Activated CD4-positive, alpha-beta memory T cell treated with anti-CD3 and anti-CD28 coated beads for 36 hours (primary cell): ENCODE measurements at regions of chr10 and their contacts with region 1.

Region 1: DNA sequence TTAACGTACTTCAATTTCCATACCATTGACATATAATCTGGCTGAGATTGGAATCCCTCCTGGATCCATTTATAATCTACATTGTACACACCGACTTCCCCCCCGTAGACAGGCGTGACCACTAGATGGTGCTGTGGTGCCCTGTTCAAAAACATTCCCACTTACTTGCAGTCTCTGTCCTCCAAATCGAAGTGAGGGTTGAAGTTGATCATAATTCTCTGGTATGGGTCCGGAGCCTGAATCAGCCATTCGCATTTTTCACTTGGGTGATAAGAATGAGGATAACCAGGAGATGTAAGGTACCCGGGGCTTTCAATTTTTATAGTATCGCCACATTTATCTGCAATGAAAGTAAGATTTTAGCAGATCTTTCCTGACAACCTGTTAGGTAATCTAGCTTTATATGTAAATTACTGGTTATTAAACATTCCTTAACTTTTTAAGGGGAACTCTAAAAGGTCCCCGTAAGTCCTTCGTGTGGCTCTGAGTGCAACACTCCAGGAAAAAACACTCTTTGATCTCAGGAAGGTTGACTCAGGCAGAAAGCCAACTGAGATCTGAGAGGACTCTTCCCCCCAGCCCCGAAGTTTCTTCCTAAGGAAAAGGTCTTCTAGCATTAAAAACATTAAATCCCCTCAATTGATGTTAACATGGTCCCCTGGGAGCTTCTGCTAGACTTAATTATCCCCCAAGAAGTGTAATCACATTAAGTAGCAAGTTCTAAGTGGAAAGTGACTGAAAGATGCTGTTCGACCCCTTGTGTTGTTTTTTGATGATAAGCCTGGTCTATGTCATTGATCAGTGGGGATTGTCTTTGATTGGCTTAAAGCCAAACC is 3.7 kb downstream of the NRP1 start:
- DNase-seq: peak; percentile 86
- H3K4me3 Mint-ChIP-seq: no peak overlapping the region
- H3K27ac Mint-ChIP-seq: no peak overlapping the region
- H3K4me1 Mint-ChIP-seq: peaks cover 18% of the 10 kb centered on the region
- H3K27me3 Mint-ChIP-seq: peaks cover 56% of the 10 kb centered on the region

Region 2: DNA sequence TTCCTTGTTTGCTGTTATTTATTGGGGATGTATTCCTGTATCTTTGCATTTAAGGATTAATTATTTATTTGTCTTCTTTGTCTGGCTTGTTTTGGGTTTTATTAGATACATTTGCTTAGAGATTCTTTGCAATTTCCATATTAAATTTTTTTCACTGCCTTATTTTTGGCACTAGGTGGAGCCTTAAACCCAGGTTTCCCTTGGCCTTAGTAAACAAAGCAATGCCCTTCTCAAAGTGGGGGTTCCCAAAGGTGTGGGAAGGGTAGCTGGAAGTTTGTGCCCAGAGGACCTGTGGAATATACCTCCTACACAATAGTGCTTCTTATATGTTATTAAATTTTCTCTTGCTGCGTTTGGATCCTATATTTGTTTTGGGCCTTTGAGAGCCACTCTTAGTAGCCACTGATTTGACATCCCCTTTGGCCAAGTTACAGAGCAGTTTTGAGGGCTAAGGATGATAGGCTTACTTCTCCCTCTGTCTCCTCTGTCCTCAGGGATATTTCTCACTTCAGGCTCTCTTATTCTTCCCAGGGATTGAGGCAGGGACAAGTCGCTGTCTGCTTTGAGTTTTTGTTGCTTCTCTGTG is 535.1 kb before region 1 on chr10:
- CTCF ChIA-PET with region 1: no interaction called
- POLR2A ChIA-PET with region 1: no interaction called
- intact Hi-C with region 1: loop called (anchors 10 kb)
- DNase-seq: no peak
- H3K4me3 Mint-ChIP-seq: no peak overlapping the region
- H3K27ac Mint-ChIP-seq: no peak overlapping the region
- H3K4me1 Mint-ChIP-seq: no peaks in the 10 kb centered on the region
- H3K27me3 Mint-ChIP-seq: no peaks in the 10 kb centered on the region

Region 3: DNA sequence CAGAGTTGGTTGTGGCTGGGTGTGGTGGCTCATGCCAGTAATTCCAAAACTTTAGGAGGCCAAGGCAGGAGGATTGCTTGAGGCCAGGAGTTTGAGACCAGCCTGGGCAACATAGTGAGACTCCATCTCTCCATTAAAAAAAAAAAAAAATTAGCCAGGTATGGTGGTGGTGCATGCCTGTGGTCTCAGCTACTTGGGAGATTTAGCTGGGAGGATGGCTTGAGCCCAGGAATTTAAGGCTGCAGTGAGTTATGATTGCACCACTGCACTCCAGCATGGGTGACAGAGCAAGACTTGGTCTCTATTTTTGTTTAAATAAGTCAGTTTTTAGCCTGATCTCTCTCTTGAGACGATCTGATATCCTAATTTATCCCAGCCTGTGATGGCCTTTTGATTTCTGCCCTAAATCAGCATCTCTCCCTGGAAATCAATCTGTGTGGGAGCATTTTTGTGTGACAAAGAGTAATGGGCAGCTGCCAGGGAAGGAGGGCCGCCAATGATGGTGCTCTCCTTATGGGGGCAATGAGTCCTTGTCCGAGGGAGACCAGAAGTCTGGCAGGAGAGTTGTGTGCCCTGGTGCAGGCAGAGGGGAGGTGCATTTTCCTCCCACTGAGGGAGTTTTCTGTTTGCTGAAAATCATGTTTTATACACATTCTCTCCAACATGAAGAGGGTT is 107.3 kb before region 1 on chr10:
- CTCF ChIA-PET with region 1: no interaction called
- POLR2A ChIA-PET with region 1: no interaction called
- intact Hi-C with region 1: no loop called
- DNase-seq: no peak
- H3K4me3 Mint-ChIP-seq: no peak overlapping the region
- H3K27ac Mint-ChIP-seq: no peak overlapping the region
- H3K4me1 Mint-ChIP-seq: no peaks in the 10 kb centered on the region
- H3K27me3 Mint-ChIP-seq: peaks cover 7% of the 10 kb centered on the region

Region 4: DNA sequence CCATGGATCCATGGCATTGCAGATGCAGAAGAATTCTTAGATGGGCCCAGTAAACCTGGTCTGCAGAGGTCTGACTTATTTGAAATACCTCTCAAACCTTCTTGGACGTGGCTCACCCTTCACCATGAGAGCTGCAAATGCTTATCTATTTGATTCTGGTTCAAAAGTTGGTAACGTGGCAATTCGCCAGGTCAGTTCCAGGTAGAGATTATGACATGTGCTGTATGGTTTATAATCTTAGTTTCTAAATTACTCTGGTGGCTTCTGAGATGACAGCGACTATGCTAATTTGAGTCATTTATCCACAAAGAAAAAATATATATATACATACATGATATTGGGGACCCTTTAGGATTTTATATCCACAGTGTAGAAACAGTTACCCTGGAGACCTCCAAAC is 65.1 kb before region 1 on chr10:
- CTCF ChIA-PET with region 1: no interaction called
- POLR2A ChIA-PET with region 1: no interaction called
- intact Hi-C with region 1: loop called (anchors 5 kb)
- DNase-seq: peak; percentile 77
- H3K4me3 Mint-ChIP-seq: no peak overlapping the region
- H3K27ac Mint-ChIP-seq: peak overlapping the region; percentile 13
- H3K4me1 Mint-ChIP-seq: peaks cover 28% of the 10 kb centered on the region
- H3K27me3 Mint-ChIP-seq: peaks cover 32% of the 10 kb centered on the region

Region 5: GRCh38 chr10:33376976-33377657 is 46.4 kb after region 1 on chr10:
- CTCF ChIA-PET with region 1: interaction called, 3 read pairs
- POLR2A ChIA-PET with region 1: no interaction called
- intact Hi-C with region 1: loop called (anchors 5 kb)
- DNase-seq: no peak
- H3K4me3 Mint-ChIP-seq: no peak overlapping the region
- H3K27ac Mint-ChIP-seq: no peak overlapping the region
- H3K4me1 Mint-ChIP-seq: peaks cover 27% of the 10 kb centered on the region
- H3K27me3 Mint-ChIP-seq: peaks cover 13% of the 10 kb centered on the region

Region 6: DNA sequence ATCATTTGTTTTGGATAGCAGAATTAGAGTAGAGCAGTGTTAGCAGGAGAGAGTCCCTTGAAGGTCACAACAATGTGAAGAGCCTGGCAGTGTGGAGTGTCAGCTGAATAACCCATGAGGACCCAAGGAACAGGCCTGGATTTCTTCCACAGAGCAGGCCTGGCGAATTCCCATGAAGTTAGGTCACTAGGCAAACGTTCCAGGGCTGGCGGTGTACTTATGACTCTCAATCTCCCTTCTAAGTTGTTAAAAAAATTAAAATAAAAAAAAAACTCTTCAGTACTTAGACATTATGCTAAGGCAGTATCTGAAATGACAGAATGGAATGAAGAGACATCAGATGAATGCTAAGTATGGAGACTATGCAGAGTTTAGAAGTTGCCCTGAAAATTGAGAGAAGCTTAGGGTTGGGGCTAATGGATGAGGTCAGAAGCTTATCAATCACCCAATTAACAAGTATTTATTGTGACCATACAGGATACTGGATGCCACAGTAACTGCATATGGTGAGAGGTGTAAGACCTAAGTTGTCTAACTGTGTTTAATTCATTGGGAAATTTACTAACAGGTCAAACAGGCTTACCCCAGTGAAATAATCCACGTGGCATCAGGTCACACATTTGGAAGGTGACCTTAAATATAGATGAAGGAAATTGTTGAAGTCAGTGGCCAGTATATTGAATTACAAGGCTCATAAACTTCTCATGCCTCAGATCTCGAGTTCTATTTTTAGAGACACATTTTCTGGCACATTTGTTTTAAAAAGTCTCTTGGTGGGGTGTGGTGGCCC is 129.9 kb after region 1 on chr10:
- CTCF ChIA-PET with region 1: no interaction called
- POLR2A ChIA-PET with region 1: no interaction called
- intact Hi-C with region 1: no loop called
- DNase-seq: no peak
- H3K4me3 Mint-ChIP-seq: no peak overlapping the region
- H3K27ac Mint-ChIP-seq: no peak overlapping the region
- H3K4me1 Mint-ChIP-seq: no peaks in the 10 kb centered on the region
- H3K27me3 Mint-ChIP-seq: peaks cover 3% of the 10 kb centered on the region

Region 7: GRCh38 chr10:33509231-33509831 is 178.6 kb after region 1 on chr10:
- CTCF ChIA-PET with region 1: interaction called, 4 read pairs
- POLR2A ChIA-PET with region 1: no interaction called
- intact Hi-C with region 1: loop called (anchors 5 kb)
- DNase-seq: peak; percentile 60
- H3K4me3 Mint-ChIP-seq: no peak overlapping the region
- H3K27ac Mint-ChIP-seq: no peak overlapping the region
- H3K4me1 Mint-ChIP-seq: peaks cover 13% of the 10 kb centered on the region
- H3K27me3 Mint-ChIP-seq: peaks cover 18% of the 10 kb centered on the region

Region 8: GRCh38 chr10:34637418-34637911 is 1306.7 kb after region 1 on chr10:
- CTCF ChIA-PET with region 1: interaction called, 8 read pairs
- POLR2A ChIA-PET with region 1: no interaction called
- intact Hi-C with region 1: loop called (anchors 1 kb)
- DNase-seq: peak; percentile 75
- H3K4me3 Mint-ChIP-seq: no peak overlapping the region
- H3K27ac Mint-ChIP-seq: no peak overlapping the region
- H3K4me1 Mint-ChIP-seq: peaks cover 7% of the 10 kb centered on the region
- H3K27me3 Mint-ChIP-seq: peaks cover 2% of the 10 kb centered on the region